Activated B cell treated with CpG ODN at 0.5 μM for 24 hours (primary cell): ENCODE measurements at regions of chr16 and their contacts with region 1.

Region 1: GRCh38 chr16:11689031-11689761 is 20.9 kb downstream of the SNN start:
- DNase-seq: no peak
- ATAC-seq: peak; percentile 98
- H3K4me3 Mint-ChIP-seq: peak overlapping the region; percentile 58
- H3K27ac Mint-ChIP-seq: peak overlapping the region; percentile 84
- H3K4me1 Mint-ChIP-seq: peaks cover 77% of the 10 kb centered on the region
- H3K27me3 Mint-ChIP-seq: no peaks in the 10 kb centered on the region
- CTCF ChIP-seq: no peak

Region 2: GRCh38 chr16:11667824-11668622 is 21.2 kb before region 1 on chr16 and contains the start of gene SNN:
- CTCF ChIA-PET with region 1: interaction called, 6 read pairs
- POLR2A ChIA-PET with region 1: interaction called, 22 read pairs
- intact Hi-C with region 1: loop called (anchors 1 kb)
- DNase-seq: peak; percentile 86
- ATAC-seq: peak; percentile 79
- H3K4me3 Mint-ChIP-seq: peak within 1 kb of the TSS; percentile 90
- H3K27ac Mint-ChIP-seq: peak within 1 kb of the TSS; percentile 89
- H3K4me1 Mint-ChIP-seq: peaks cover 72% of the 10 kb centered on the region
- H3K27me3 Mint-ChIP-seq: no peaks in the 10 kb centered on the region
- CTCF ChIP-seq: no peak
- total RNA-seq, gene SNN: 31.9 and 32.1 TPM in 2 replicates

Region 3: DNA sequence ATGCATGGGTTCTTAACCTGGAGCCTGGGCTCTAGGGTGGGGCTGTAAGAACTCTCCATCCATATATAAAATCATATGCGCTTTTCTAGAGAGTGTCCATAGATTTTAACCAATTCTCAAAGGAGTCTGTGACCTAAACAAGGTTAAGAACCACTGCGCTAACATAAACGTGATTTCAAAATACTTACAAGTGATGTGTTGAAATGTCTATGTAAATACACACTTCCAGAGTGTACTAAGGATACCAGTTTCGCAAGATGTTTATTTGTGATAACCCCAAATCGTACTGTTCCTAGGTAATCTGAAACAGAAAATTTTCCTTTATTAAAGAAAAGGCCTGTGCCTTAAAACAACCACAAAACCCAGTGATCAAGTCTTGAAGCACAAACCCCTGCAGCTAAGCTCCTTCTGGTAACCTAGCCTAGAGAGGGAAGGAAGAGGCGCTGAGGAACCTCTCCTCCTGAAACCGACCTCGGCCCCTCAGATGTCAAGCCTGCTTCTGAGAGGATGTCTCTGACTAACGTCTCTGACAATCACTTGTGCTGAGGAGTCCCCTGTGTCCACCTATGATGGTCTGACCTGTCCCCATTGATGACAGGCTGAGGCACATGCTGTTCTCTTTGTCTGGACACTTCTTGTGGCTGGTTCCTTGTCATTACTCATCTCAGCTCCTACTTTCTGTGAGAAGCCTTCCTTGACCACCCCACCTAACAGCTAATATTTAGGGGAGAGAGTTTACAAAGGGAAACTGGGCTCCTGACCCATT is 11.3 kb after region 1 on chr16:
- CTCF ChIA-PET with region 1: no interaction called
- POLR2A ChIA-PET with region 1: interaction called, 14 read pairs
- intact Hi-C with region 1: no loop called
- DNase-seq: no peak
- ATAC-seq: no peak
- H3K4me3 Mint-ChIP-seq: no peak overlapping the region
- H3K27ac Mint-ChIP-seq: no peak overlapping the region
- H3K4me1 Mint-ChIP-seq: peaks cover 23% of the 10 kb centered on the region
- H3K27me3 Mint-ChIP-seq: no peaks in the 10 kb centered on the region
- CTCF ChIP-seq: no peak

Region 4: GRCh38 chr16:11915644-11916523 is 226.7 kb after region 1 on chr16 and contains the start of gene GSPT1:
- CTCF ChIA-PET with region 1: no interaction called
- POLR2A ChIA-PET with region 1: no interaction called
- intact Hi-C with region 1: loop called (anchors 5 kb)
- DNase-seq: peak; percentile 98
- ATAC-seq: peak; percentile 93
- H3K4me3 Mint-ChIP-seq: peak within 1 kb of the TSS; percentile 89
- H3K27ac Mint-ChIP-seq: peak within 1 kb of the TSS; percentile 89
- H3K4me1 Mint-ChIP-seq: peaks cover 31% of the 10 kb centered on the region
- H3K27me3 Mint-ChIP-seq: peaks cover 4% of the 10 kb centered on the region
- CTCF ChIP-seq: no peak
- total RNA-seq, gene GSPT1: 99.9 and 101 TPM in 2 replicates